ENCODE measurements at regions of chr19 and their contacts with region 1.

Region 1: GRCh38 chr19:2782936-2783780 is at the start of gene SGTA:
- DNase-seq: peak; percentile 91 to 99 (median 96)
- ATAC-seq: peak; percentile 62
- H3K4me3 ChIP-seq: peak within 1 kb of the TSS; percentile 94 to 98
- H3K4me3 Mint-ChIP-seq: peak within 1 kb of the TSS; percentile 86
- H3K27ac ChIP-seq: peak within 1 kb of the TSS; percentile 89 to 94
- H3K27ac Mint-ChIP-seq: peak within 1 kb of the TSS; percentile 92
- H3K4me1 ChIP-seq: peaks cover 41% of the 10 kb centered on the region
- H3K4me1 Mint-ChIP-seq: peaks cover 52% of the 10 kb centered on the region
- H3K27me3 ChIP-seq: no peaks in the 10 kb centered on the region
- H3K27me3 Mint-ChIP-seq: no peaks in the 10 kb centered on the region
- CTCF ChIP-seq: no peak
- total RNA-seq, gene SGTA: 38.2 to 38.9 TPM

Region 2: GRCh38 chr19:2427429-2428320 is 355.5 kb before region 1 on chr19 and contains the start of gene TIMM13:
- CTCF ChIA-PET with region 1: no interaction called
- POLR2A ChIA-PET with region 1: no interaction called
- intact Hi-C with region 1: loop called in 1 of 2 experiments (anchors 1 kb)
- DNase-seq: peak; percentile 91 to 98 (median 96)
- ATAC-seq: peak; percentile 94
- H3K4me3 ChIP-seq: peak within 1 kb of the TSS; percentile 92 to 98
- H3K4me3 Mint-ChIP-seq: peak within 1 kb of the TSS; percentile 95
- H3K27ac ChIP-seq: peak within 1 kb of the TSS; percentile 96 to 99
- H3K27ac Mint-ChIP-seq: peak within 1 kb of the TSS; percentile 98
- H3K4me1 ChIP-seq: peaks cover 19% of the 10 kb centered on the region
- H3K4me1 Mint-ChIP-seq: peaks cover 13% of the 10 kb centered on the region
- H3K27me3 ChIP-seq: no peaks in the 10 kb centered on the region
- H3K27me3 Mint-ChIP-seq: no peaks in the 10 kb centered on the region
- CTCF ChIP-seq: no peak
- total RNA-seq, gene TIMM13: 21.5 to 24.4 TPM

Region 3: GRCh38 chr19:2702162-2703076 is 80.7 kb before region 1 on chr19 and contains the start of gene GNG7:
- CTCF ChIA-PET with region 1: no interaction called
- POLR2A ChIA-PET with region 1: no interaction called
- intact Hi-C with region 1: loop called in 1 of 2 experiments (anchors 2 kb)
- DNase-seq: peak; percentile 89 to 97 (median 94)
- ATAC-seq: peak; percentile 100
- H3K4me3 ChIP-seq: peak within 1 kb of the TSS; percentile 38 to 50
- H3K4me3 Mint-ChIP-seq: peak within 1 kb of the TSS; percentile 79
- H3K27ac ChIP-seq: no peak within 1 kb of the TSS
- H3K27ac Mint-ChIP-seq: no peak within 1 kb of the TSS
- H3K4me1 ChIP-seq: peaks cover 26% of the 10 kb centered on the region
- H3K4me1 Mint-ChIP-seq: peaks cover 33% of the 10 kb centered on the region
- H3K27me3 ChIP-seq: no peaks in the 10 kb centered on the region
- H3K27me3 Mint-ChIP-seq: no peaks in the 10 kb centered on the region
- CTCF ChIP-seq: no peak
- total RNA-seq, gene GNG7: 2.6 to 2.9 TPM

Region 4: GRCh38 chr19:2809387-2810093 is 26.4 kb after region 1 on chr19:
- CTCF ChIA-PET with region 1: no interaction called
- POLR2A ChIA-PET with region 1: no interaction called
- intact Hi-C with region 1: no loop called
- DNase-seq: no peak
- ATAC-seq: no peak
- H3K4me3 ChIP-seq: no peak overlapping the region
- H3K4me3 Mint-ChIP-seq: no peak overlapping the region
- H3K27ac ChIP-seq: no peak overlapping the region
- H3K27ac Mint-ChIP-seq: no peak overlapping the region
- H3K4me1 ChIP-seq: no peaks in the 10 kb centered on the region
- H3K4me1 Mint-ChIP-seq: no peaks in the 10 kb centered on the region
- H3K27me3 ChIP-seq: no peaks in the 10 kb centered on the region
- H3K27me3 Mint-ChIP-seq: no peaks in the 10 kb centered on the region
- CTCF ChIP-seq: no peak

Region 5: DNA sequence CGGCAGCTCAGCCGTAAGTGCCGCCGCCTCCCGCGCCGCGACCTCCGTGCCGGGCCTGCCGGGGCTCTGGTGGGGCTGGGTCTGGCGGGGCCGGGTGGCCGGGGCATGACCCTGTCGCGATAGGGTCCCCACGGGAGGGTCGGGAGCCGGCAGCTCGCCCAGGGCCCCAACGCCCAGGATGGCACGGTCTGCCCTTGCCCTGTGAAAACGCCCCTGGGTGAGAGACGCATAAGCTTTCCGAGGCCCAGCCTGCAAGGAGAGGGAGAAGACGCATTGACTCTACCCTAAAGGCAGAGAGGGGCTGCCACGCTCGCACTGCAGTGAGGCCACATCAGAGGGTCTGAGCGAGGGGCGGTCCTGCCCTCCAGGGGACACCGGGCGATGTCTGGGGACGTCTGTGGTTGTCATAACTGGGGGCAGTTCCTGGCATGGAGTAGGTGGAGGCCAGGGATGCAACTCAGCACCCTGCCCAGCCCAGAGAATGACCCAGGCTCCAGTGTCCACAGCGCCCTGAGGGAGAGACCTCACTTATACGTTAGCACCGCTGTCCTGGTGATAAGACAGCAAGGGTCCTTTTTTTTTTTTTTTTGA is 37.0 kb after region 1 on chr19:
- CTCF ChIA-PET with region 1: no interaction called
- POLR2A ChIA-PET with region 1: no interaction called
- intact Hi-C with region 1: loop called in 1 of 2 experiments (anchors 1 kb)
- DNase-seq: peak in 1 of 9 experiments; percentile 16
- ATAC-seq: peak; percentile 9
- H3K4me3 ChIP-seq: peak overlapping the region; percentile 50 to 72
- H3K4me3 Mint-ChIP-seq: peak overlapping the region; percentile 86
- H3K27ac ChIP-seq: peak overlapping the region in 1 of 2 experiments; percentile 33
- H3K27ac Mint-ChIP-seq: peak overlapping the region; percentile 22
- H3K4me1 ChIP-seq: peaks cover 8% of the 10 kb centered on the region
- H3K4me1 Mint-ChIP-seq: peaks cover 10% of the 10 kb centered on the region
- H3K27me3 ChIP-seq: no peaks in the 10 kb centered on the region
- H3K27me3 Mint-ChIP-seq: no peaks in the 10 kb centered on the region
- CTCF ChIP-seq: no peak

Region 6: GRCh38 chr19:2944775-2945574 is 161.8 kb after region 1 on chr19 and contains the start of gene ZNF77:
- CTCF ChIA-PET with region 1: no interaction called
- POLR2A ChIA-PET with region 1: no interaction called
- intact Hi-C with region 1: loop called in 1 of 2 experiments (anchors 10 kb)
- DNase-seq: peak; percentile 97 to 100 (median 99)
- ATAC-seq: peak; percentile 97
- H3K4me3 ChIP-seq: peak within 1 kb of the TSS; percentile 80 to 84
- H3K4me3 Mint-ChIP-seq: peak within 1 kb of the TSS; percentile 96
- H3K27ac ChIP-seq: peak within 1 kb of the TSS; percentile 82 to 90
- H3K27ac Mint-ChIP-seq: peak within 1 kb of the TSS; percentile 97
- H3K4me1 ChIP-seq: peaks cover 21% of the 10 kb centered on the region
- H3K4me1 Mint-ChIP-seq: peaks cover 33% of the 10 kb centered on the region
- H3K27me3 ChIP-seq: no peaks in the 10 kb centered on the region
- H3K27me3 Mint-ChIP-seq: no peaks in the 10 kb centered on the region
- CTCF ChIP-seq: no peak
- total RNA-seq, gene ZNF77: 1.4 to 2.0 TPM

Region 7: DNA sequence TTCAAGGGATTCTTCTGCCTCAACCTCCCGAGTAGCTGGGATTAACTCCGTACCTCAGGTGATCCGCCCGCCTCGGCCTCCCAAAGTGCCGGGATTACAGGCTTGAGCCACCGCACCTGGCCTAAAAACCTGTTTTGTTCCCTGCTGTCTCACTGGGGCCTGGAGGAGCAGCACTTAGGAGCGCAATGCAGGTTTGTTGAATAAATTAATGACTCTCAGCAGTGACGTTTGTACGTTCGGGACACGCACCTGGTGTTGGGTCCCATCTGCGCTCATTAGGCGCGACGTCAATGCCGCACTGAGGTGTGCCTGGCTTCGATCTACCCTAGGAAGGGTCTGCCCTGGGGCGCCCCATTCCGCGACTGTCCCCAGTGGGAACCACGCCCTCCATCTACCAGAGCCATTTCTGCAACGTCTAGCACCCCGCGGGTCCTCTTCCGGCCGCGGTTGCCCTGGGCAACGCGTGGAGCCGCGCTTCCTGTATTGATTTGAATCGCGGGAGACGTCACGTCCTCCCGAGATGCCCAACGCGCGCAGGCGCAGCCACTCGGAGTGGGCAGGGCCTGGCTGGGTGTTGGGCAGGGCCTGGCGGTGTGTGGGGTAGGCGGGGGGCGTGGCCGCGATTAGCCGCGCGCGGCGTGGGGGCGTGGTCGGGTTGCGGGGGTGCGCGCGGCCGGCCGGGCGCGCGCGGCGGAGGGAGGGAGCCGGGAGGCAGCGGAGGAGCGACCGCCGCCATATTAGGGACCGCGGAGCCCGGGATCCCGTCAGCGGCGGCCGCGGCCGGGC is 722.6 kb after region 1 on chr19 and contains the start of gene FZR1:
- CTCF ChIA-PET with region 1: no interaction called
- POLR2A ChIA-PET with region 1: no interaction called
- intact Hi-C with region 1: loop called in 1 of 2 experiments (anchors 10 kb)
- DNase-seq: peak; percentile 99 to 100 (median 100)
- ATAC-seq: peak; percentile 85
- H3K4me3 ChIP-seq: peak within 1 kb of the TSS; percentile 76 to 83
- H3K4me3 Mint-ChIP-seq: peak within 1 kb of the TSS; percentile 85
- H3K27ac ChIP-seq: peak within 1 kb of the TSS; percentile 97
- H3K27ac Mint-ChIP-seq: peak within 1 kb of the TSS; percentile 97
- H3K4me1 ChIP-seq: peaks cover 36% of the 10 kb centered on the region
- H3K4me1 Mint-ChIP-seq: peaks cover 48% of the 10 kb centered on the region
- H3K27me3 ChIP-seq: no peaks in the 10 kb centered on the region
- H3K27me3 Mint-ChIP-seq: no peaks in the 10 kb centered on the region
- CTCF ChIP-seq: no peak
- total RNA-seq, gene FZR1: 130 to 142 TPM

Measured in CD8-positive, alpha-beta T cell (primary cell).